ENCODE measurements at regions of chr2 and their contacts with region 1.

Region 1: DNA sequence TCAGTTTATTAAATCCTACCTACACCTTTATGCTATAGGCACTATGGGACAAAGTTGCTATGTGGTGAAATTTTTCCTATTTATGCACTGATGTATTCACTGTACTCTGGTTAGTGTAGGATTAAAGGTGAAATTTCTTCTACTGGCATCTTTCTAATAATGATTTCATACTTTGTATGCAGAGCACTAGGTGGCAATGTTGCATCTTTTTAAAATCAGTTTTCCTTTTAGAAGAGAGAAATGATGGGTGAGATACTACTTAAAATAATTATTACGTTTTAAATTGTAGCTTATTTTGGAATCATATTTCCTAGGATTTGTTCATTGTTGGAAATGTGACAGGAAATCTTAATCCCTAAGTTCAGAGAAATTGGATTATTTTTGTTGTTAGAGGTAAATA is 150.9 kb downstream of the CD8B2 start:
- DNase-seq: no peak
- H3K4me3 ChIP-seq: no peak overlapping the region
- H3K27ac ChIP-seq: no peak overlapping the region
- H3K4me1 ChIP-seq: no peaks in the 10 kb centered on the region
- H3K27me3 ChIP-seq: no peaks in the 10 kb centered on the region
- CTCF ChIP-seq: peak; percentile 22 to 37

Region 2: DNA sequence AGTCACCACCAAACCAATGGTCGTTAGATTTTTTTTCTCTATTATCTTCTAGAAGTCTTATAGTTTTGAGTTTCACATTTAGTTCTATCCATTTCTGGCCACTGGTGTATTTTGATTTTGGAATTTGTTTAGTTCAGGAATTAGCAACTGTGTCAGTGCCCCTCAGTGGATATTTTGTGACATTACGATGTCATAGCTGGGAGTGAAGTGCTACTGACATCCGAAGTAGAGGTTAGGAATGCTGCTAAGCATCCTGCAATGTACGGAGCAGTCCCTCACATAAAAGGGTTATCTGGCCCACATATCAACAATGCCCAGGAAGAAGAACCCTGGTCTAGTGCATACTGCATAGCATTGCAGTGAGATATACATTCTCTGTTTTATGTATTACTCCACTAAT is 1031.3 kb after region 1 on chr2:
- CTCF ChIA-PET with region 1: no interaction called
- dilution Hi-C with region 1: no loop called
- in situ Hi-C with region 1: no loop called
- intact Hi-C with region 1: loop called (anchors 5 kb)
- DNase-seq: no peak
- H3K4me3 ChIP-seq: no peak overlapping the region
- H3K27ac ChIP-seq: no peak overlapping the region
- H3K4me1 ChIP-seq: no peaks in the 10 kb centered on the region
- H3K27me3 ChIP-seq: no peaks in the 10 kb centered on the region
- CTCF ChIP-seq: peak; percentile 20 to 43

Region 3: DNA sequence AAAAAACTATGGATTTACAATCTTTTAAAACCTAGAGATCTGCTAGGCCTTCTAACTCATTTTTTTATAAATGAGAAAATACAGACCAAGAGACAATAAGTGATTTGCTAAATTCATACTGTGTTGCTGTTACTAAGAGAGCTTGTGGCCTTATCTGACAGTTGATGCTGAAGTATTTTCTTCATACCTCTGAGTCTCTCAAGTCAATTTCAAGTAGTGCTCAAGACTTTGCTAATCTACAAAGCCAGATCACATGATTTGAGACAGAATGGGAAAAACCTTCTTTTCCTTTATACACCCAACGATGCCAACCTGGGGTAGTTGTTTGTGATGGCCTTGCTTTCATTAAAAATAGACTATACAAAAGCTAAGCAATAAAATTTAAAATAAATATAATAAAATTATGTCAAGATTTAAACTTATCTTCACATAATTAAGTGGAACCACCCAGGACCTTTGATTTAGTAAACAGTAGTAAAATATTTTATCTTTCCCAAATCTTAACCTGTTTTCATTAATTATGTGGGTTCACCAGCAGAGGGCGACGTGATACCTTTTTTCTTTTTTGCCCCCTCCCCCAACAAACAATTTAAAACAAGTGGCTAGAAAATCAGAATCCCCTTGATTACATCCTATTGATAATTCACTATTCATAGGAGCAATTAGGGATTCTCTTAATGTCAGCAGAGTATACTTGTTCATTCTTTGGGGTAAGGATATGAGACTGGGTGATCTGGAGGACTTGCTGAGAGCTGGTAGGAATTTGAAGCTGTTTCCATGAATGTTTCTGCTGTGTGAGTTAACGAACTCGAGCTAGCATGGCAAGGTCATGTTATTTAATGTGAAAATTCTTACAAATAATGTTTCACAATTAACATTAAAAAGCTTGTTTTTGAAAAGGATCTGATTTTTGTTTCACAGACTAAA is 1298.7 kb after region 1 on chr2:
- CTCF ChIA-PET with region 1: no interaction called
- dilution Hi-C with region 1: no loop called
- in situ Hi-C with region 1: loop called in 1 of 2 experiments (anchors 10 kb)
- intact Hi-C with region 1: loop called (anchors 10 kb)
- DNase-seq: no peak
- H3K4me3 ChIP-seq: no peak overlapping the region
- H3K27ac ChIP-seq: no peak overlapping the region
- H3K4me1 ChIP-seq: no peaks in the 10 kb centered on the region
- H3K27me3 ChIP-seq: no peaks in the 10 kb centered on the region
- CTCF ChIP-seq: peak; percentile 30 to 42

Region 4: DNA sequence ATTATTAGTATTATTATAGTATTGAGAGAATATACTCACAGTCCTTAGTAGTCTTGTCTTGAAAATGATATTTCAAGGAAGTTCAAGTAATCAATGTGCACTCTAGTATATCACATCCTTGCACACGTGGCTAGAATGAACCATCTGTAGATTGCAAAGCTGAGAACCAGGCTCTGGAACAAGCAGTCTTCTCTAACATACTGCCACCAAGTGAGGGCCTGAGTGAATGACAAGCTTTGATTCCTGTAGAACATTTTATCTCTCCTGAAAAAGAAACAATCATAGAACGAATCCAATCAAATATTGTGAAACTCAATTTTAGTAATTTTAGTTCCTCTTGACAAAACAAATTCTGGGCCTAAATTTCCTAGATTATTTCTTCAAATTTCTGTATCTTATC is 1546.4 kb after region 1 on chr2:
- CTCF ChIA-PET with region 1: no interaction called
- dilution Hi-C with region 1: no loop called
- in situ Hi-C with region 1: no loop called
- intact Hi-C with region 1: loop called (anchors 10 kb)
- DNase-seq: no peak
- H3K4me3 ChIP-seq: no peak overlapping the region
- H3K27ac ChIP-seq: no peak overlapping the region
- H3K4me1 ChIP-seq: no peaks in the 10 kb centered on the region
- H3K27me3 ChIP-seq: no peaks in the 10 kb centered on the region
- CTCF ChIP-seq: peak; percentile 44 to 69

Measured in mammary epithelial cell (primary cell).